Activated B cell treated with CpG ODN at 0.5 μM for 24 hours (primary cell): ENCODE measurements at regions of chr14 and their contacts with region 1.

Region 1: GRCh38 chr14:51780006-51780692 is 80.3 kb upstream of the GNG2 start:
- DNase-seq: peak; percentile 46
- ATAC-seq: peak; percentile 85
- H3K4me3 Mint-ChIP-seq: no peak overlapping the region
- H3K27ac Mint-ChIP-seq: no peak overlapping the region
- H3K4me1 Mint-ChIP-seq: peaks cover 9% of the 10 kb centered on the region
- H3K27me3 Mint-ChIP-seq: peaks cover 21% of the 10 kb centered on the region
- CTCF ChIP-seq: peak; percentile 89

Region 2: GRCh38 chr14:50954811-50955372 is 825.3 kb before region 1 on chr14:
- CTCF ChIA-PET with region 1: no interaction called
- POLR2A ChIA-PET with region 1: no interaction called
- intact Hi-C with region 1: loop called (anchors 1 kb)
- DNase-seq: no peak
- ATAC-seq: peak; percentile 31
- H3K4me3 Mint-ChIP-seq: no peak overlapping the region
- H3K27ac Mint-ChIP-seq: no peak overlapping the region
- H3K4me1 Mint-ChIP-seq: no peaks in the 10 kb centered on the region
- H3K27me3 Mint-ChIP-seq: no peaks in the 10 kb centered on the region
- CTCF ChIP-seq: no peak

Region 3: DNA sequence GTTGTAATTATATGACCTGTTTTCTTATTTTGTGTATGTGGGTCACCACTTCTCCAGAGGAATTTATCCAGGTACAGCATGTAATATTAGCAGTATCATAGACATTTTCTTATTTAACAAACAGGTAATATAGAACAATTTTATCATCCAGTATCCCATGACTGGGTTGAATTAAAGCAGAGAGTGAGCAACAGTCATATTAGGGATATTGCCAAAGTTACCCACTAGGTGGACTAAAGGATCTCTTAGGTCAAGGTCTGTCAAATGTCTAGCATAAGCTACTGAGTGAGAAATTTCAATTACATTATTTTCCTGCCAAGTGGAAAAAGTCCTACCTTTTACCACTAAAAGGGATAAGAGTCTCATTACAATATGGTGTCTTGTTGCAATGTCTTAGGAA is 623.1 kb before region 1 on chr14:
- CTCF ChIA-PET with region 1: interaction called, 5 read pairs
- POLR2A ChIA-PET with region 1: no interaction called
- intact Hi-C with region 1: loop called (anchors 2 kb)
- DNase-seq: no peak
- ATAC-seq: peak; percentile 54
- H3K4me3 Mint-ChIP-seq: no peak overlapping the region
- H3K27ac Mint-ChIP-seq: no peak overlapping the region
- H3K4me1 Mint-ChIP-seq: peaks cover 16% of the 10 kb centered on the region
- H3K27me3 Mint-ChIP-seq: no peaks in the 10 kb centered on the region
- CTCF ChIP-seq: no peak

Region 4: GRCh38 chr14:51283402-51284085 is 496.6 kb before region 1 on chr14:
- CTCF ChIA-PET with region 1: interaction called, 25 read pairs
- POLR2A ChIA-PET with region 1: no interaction called
- intact Hi-C with region 1: loop called (anchors 1 kb)
- DNase-seq: no peak
- ATAC-seq: peak; percentile 52
- H3K4me3 Mint-ChIP-seq: no peak overlapping the region
- H3K27ac Mint-ChIP-seq: no peak overlapping the region
- H3K4me1 Mint-ChIP-seq: peaks cover 9% of the 10 kb centered on the region
- H3K27me3 Mint-ChIP-seq: no peaks in the 10 kb centered on the region
- CTCF ChIP-seq: peak; percentile 88

Region 5: GRCh38 chr14:51369814-51370213 is 410.3 kb before region 1 on chr14:
- CTCF ChIA-PET with region 1: no interaction called
- POLR2A ChIA-PET with region 1: no interaction called
- intact Hi-C with region 1: loop called (anchors 2 kb)
- DNase-seq: no peak
- ATAC-seq: no peak
- H3K4me3 Mint-ChIP-seq: no peak overlapping the region
- H3K27ac Mint-ChIP-seq: no peak overlapping the region
- H3K4me1 Mint-ChIP-seq: no peaks in the 10 kb centered on the region
- H3K27me3 Mint-ChIP-seq: peaks cover 1% of the 10 kb centered on the region
- CTCF ChIP-seq: no peak

Region 6: DNA sequence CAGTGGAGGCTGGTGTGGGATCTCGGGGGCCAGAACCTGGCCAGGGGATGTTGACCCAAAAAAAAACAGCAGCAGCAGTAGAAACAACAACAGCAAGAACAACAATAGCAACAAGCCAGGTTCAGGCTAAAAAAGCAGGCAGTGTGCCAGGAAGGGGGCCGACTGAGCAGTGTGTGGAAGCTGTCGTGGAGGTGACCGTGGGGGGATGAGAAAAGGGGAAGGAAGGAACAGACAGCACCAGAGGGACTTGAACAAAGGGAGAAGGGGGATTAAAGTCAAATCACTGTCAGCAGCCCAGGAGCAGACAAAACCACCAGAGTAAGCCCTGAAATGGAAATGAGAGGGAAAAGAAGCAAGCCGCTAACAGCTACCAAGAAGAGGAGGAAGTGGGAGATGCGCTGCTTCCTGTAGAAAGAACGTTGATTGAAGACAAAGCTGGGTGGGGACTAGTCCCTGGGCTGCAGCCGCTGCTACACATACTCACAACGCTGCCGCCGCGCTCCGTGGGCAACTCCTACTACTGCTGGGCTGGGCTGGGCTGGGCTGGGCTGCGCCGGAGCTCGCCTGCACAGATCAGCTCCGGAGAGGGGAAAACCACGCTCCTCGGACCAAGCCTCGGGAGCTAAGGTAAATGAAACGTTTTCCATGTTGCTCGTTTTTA is 80.1 kb after region 1 on chr14 and contains the start of gene GNG2:
- CTCF ChIA-PET with region 1: interaction called, 4 read pairs
- POLR2A ChIA-PET with region 1: interaction called, 10 read pairs
- intact Hi-C with region 1: loop called (anchors 1 kb)
- DNase-seq: peak; percentile 58
- ATAC-seq: peak; percentile 95
- H3K4me3 Mint-ChIP-seq: peak within 1 kb of the TSS; percentile 95
- H3K27ac Mint-ChIP-seq: peak within 1 kb of the TSS; percentile 88
- H3K4me1 Mint-ChIP-seq: peaks cover 70% of the 10 kb centered on the region
- H3K27me3 Mint-ChIP-seq: no peaks in the 10 kb centered on the region
- CTCF ChIP-seq: no peak
- total RNA-seq, gene GNG2: 68.7 and 70.0 TPM in 2 replicates